Right cardiac atrium (tissue), 5 donors: ENCODE measurements at regions of chr16 and their contacts with region 1.

Region 1: GRCh38 chr16:25051406-25052150 is 36.4 kb upstream of the ARHGAP17 start:
- DNase-seq: no peak
- ATAC-seq: peak; percentile 40 to 41
- H3K4me3 ChIP-seq: no peak overlapping the region
- H3K27ac ChIP-seq: peak overlapping the region; percentile 82
- H3K4me1 ChIP-seq: no peaks in the 10 kb centered on the region
- H3K27me3 ChIP-seq: no peaks in the 10 kb centered on the region

Region 2: DNA sequence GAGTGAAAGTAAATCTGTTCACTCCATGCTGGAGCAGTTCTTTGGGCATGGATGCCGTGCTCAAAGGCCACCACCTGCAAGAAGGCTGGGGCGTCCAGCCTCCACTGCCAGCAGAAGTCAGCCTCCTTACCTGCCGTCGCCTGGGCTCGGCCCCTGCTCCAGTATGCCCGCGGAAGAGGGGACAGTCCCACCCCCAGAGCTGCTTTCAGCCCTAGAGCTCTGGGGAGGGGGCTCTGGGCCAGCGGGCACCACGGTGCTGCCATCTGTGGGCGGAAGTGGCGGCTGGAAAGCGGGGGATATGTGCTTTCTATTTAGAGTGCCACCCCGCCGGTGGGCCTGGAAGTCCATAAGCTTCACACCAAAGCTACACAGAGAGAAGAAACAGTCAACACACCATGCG is 112.3 kb before region 1 on chr16:
- intact Hi-C with region 1: no loop called
- DNase-seq: no peak
- ATAC-seq: no peak
- H3K4me3 ChIP-seq: no peak overlapping the region
- H3K27ac ChIP-seq: no peak overlapping the region
- H3K4me1 ChIP-seq: no peaks in the 10 kb centered on the region
- H3K27me3 ChIP-seq: no peaks in the 10 kb centered on the region

Region 3: GRCh38 chr16:24975428-24975889 is 76.1 kb before region 1 on chr16:
- intact Hi-C with region 1: loop called in 1 of 4 experiments (anchors 10 kb)
- DNase-seq: no peak
- ATAC-seq: no peak
- H3K4me3 ChIP-seq: no peak overlapping the region
- H3K27ac ChIP-seq: no peak overlapping the region
- H3K4me1 ChIP-seq: peaks cover 26% of the 10 kb centered on the region
- H3K27me3 ChIP-seq: no peaks in the 10 kb centered on the region

Region 4: DNA sequence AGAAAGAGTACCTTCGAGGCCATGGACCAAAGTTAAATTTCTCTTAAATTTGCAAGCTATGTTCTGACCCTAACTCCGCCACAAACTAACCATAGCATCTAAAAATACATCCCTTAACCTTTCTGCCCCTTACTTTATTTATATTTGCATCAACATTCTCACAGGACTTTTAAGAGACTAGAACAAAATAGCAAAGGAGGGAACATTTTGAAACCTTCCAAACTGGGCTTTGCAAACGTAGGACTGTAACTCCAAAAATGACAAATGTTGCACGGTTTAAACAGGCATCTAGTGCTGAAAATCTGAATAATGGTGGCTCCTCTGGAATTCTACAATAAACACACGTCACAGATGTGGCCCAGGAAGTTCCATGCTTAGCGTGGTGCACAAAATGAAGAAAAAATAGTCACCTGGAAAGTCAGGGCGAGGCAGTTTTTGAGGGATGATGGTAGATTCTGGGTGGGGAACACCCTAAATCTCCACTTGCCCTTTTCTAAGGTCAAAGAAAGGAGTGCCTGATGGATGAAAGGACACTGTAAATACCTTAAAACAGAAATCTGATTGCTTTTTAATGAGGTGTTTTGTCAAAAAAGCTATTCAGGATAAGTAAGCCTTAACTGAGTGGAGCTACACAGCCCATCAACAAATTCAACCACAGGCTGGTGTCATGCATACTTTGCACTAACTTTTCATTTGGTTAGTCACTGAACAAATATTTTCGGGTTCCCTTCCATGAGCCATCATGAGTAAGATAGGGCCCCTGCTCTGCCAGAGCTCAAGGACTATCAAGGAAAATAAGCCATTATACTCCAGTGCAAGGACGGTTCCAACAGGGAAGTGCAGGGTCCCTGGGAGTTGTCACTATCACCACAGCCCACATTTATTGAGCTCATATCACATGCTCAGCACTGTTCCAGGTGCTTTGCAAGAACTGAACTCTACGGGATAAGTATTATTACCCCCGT is 57.6 kb before region 1 on chr16:
- intact Hi-C with region 1: no loop called
- DNase-seq: no peak
- ATAC-seq: peak; percentile 46 to 62
- H3K4me3 ChIP-seq: no peak overlapping the region
- H3K27ac ChIP-seq: peak overlapping the region; percentile 3
- H3K4me1 ChIP-seq: peaks cover 31% of the 10 kb centered on the region
- H3K27me3 ChIP-seq: no peaks in the 10 kb centered on the region

Region 5: DNA sequence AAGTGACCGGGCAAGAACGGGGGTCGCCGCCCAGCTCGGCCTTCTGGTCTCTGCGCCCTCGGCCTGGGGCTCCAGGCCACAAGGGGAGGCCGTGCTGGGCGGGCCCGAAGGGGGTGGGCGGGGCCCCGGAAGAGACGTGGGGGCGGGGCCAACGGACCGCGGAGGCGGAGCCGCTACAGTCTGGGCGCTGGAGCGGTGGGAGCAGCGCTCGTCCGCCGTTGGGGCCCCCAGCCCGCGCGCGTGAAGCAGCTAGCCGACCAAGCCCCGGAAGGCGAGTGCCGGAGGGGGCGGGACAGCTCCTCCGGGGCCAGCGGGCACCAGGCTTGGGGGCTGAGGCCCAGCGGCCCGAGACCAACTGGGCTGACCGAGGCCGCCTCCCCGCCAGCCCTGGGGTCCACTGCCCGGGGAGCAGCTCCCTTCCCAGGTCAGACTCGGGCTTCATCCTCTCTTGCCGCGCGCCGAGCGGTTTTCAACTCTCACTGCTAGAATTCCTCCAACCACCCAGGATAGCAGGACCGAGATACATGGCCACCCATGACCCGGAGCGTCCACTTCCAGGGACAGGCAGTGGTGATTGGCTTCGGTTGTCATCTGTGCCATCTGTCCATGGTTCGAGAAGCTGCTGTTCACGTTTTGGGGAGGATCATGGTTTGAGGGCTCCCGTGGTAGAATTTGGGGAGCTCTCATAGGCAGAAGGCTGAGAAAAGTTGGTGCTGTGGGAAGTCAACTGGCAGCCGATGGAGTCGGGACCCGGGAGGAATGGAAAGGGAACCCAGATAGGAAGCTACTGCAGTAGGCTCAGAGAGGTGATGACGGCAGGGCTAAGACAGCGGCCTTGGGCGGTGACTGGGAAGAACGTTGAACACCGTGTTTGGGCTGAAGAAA is 15.4 kb after region 1 on chr16:
- intact Hi-C with region 1: no loop called
- DNase-seq: peak; percentile 86 to 95 (median 93)
- ATAC-seq: peak; percentile 97 to 98
- H3K4me3 ChIP-seq: peak overlapping the region; percentile 63
- H3K27ac ChIP-seq: peak overlapping the region; percentile 82
- H3K4me1 ChIP-seq: peaks cover 2% of the 10 kb centered on the region
- H3K27me3 ChIP-seq: no peaks in the 10 kb centered on the region

Region 6: GRCh38 chr16:25111403-25112166 is 60.0 kb after region 1 on chr16 and contains the start of gene LCMT1:
- intact Hi-C with region 1: loop called in 1 of 4 experiments (anchors 5 kb)
- DNase-seq: peak; percentile 90 to 95 (median 94)
- ATAC-seq: peak; percentile 92 to 94
- H3K4me3 ChIP-seq: peak within 1 kb of the TSS; percentile 74
- H3K27ac ChIP-seq: peak within 1 kb of the TSS; percentile 85
- H3K4me1 ChIP-seq: peaks cover 2% of the 10 kb centered on the region
- H3K27me3 ChIP-seq: no peaks in the 10 kb centered on the region
- total RNA-seq, gene LCMT1: 34.2 to 41.6 (median 35.5) TPM

Region 7: GRCh38 chr16:25126820-25127232 is 75.2 kb after region 1 on chr16:
- intact Hi-C with region 1: loop called in 1 of 4 experiments (anchors 5 kb)
- DNase-seq: no peak
- ATAC-seq: peak; percentile 37 to 48
- H3K4me3 ChIP-seq: no peak overlapping the region
- H3K27ac ChIP-seq: no peak overlapping the region
- H3K4me1 ChIP-seq: no peaks in the 10 kb centered on the region
- H3K27me3 ChIP-seq: no peaks in the 10 kb centered on the region

Region 8: DNA sequence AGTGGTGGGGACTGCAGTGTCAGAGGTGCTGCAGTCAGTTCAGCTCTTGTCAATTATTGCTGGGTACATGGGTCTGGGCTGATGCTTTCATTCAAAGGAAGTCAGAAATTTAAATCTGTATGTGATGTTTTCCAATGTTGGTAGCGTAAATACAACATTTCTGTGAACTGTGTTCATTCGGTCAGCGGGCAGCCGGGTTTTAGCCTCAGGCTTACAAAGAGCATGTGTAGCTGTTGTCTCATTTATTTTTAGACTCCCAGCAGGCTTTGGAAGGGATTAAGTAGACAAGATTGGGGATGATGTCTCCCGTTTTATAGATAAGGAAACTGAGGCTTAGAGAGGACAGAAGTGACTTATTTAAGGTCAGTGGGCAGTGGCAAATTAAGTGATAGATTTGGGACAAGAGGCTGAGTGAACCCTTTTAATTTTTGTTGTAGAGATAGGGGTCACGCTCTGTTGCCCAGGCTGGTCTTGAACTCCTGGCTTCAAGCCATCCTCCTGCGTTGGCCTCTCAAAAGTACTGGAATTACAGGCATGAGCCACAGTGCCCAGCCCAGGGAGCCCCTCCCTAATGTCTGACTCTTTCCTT is 173.2 kb after region 1 on chr16:
- intact Hi-C with region 1: loop called in 3 of 4 experiments (anchors 5 kb)
- DNase-seq: no peak
- ATAC-seq: no peak
- H3K4me3 ChIP-seq: no peak overlapping the region
- H3K27ac ChIP-seq: no peak overlapping the region
- H3K4me1 ChIP-seq: no peaks in the 10 kb centered on the region
- H3K27me3 ChIP-seq: no peaks in the 10 kb centered on the region